Caco-2 (cell line): ENCODE measurements at regions of chr20 and their contacts with region 1.

Region 1: GRCh38 chr20:36886859-36887751 is 11.2 kb downstream of the TLDC2 start:
- DNase-seq: peak; percentile 94 to 97
- H3K4me3 ChIP-seq: no peak overlapping the region
- H3K4me3 Mint-ChIP-seq: peak overlapping the region; percentile 27
- H3K27ac Mint-ChIP-seq: no peak overlapping the region
- H3K4me1 ChIP-seq: peaks cover 9% of the 10 kb centered on the region; the same call in 1 of the 2 replicates
- H3K4me1 Mint-ChIP-seq: peaks cover 6% of the 10 kb centered on the region
- H3K27me3 ChIP-seq: no peaks in the 10 kb centered on the region
- H3K27me3 Mint-ChIP-seq: no peaks in the 10 kb centered on the region
- CTCF ChIP-seq: peak; percentile 100

Region 2: DNA sequence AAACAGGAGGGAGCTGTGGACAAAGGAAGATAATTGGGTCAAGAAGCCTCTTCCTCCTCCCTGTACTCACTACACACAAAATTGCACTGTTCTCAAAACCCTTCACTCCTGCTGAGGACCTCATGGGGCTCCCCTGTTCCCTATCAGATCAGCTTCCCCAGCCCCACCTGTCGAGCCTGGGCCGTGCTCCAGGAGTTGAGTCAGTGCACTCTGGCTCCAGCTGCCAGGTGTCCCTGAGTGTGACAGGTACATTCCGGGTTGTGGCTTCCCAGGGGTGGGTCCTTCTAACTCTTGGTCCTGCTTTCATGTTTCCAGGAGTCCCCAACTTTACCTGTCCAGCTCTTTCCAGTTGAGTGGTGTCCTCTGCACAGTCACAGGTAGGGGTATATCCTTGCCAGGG is 273.1 kb before region 1 on chr20:
- CTCF ChIA-PET with region 1: no interaction called
- POLR2A ChIA-PET with region 1: no interaction called
- intact Hi-C with region 1: loop called (anchors 1 kb)
- DNase-seq: no peak
- H3K4me3 ChIP-seq: no peak overlapping the region
- H3K4me3 Mint-ChIP-seq: no peak overlapping the region
- H3K27ac Mint-ChIP-seq: no peak overlapping the region
- H3K4me1 ChIP-seq: no peaks in the 10 kb centered on the region
- H3K4me1 Mint-ChIP-seq: no peaks in the 10 kb centered on the region
- H3K27me3 ChIP-seq: no peaks in the 10 kb centered on the region
- H3K27me3 Mint-ChIP-seq: no peaks in the 10 kb centered on the region
- CTCF ChIP-seq: no peak

Region 3: DNA sequence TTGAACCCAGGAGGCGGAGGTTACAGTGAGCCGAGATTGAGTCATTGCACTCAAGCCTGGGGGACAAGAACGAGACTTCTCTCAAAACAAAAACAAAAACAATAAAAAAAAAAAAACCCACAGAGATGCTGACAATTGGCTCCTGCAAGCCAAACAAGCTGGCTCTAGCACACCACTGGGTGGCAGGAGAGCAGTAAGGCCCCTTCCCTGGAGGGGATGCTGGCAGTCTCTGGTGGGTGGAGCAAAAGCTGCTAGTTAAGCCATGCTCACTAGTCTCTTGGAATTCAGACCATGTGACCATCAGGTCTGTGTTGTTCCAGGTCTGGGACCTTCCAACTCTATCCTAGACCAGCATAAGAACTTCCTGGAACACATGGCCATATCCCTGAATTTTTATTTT is 94.7 kb before region 1 on chr20:
- CTCF ChIA-PET with region 1: interaction called, 14 read pairs
- POLR2A ChIA-PET with region 1: no interaction called
- intact Hi-C with region 1: loop called (anchors 1 kb)
- DNase-seq: peak; percentile 94 to 95
- H3K4me3 ChIP-seq: no peak overlapping the region
- H3K4me3 Mint-ChIP-seq: no peak overlapping the region
- H3K27ac Mint-ChIP-seq: no peak overlapping the region
- H3K4me1 ChIP-seq: no peaks in the 10 kb centered on the region
- H3K4me1 Mint-ChIP-seq: no peaks in the 10 kb centered on the region
- H3K27me3 ChIP-seq: no peaks in the 10 kb centered on the region
- H3K27me3 Mint-ChIP-seq: no peaks in the 10 kb centered on the region
- CTCF ChIP-seq: peak; percentile 67 to 92

Region 4: GRCh38 chr20:36861875-36862801 is 25.0 kb before region 1 on chr20:
- CTCF ChIA-PET with region 1: interaction called, 5 read pairs
- POLR2A ChIA-PET with region 1: no interaction called
- intact Hi-C with region 1: loop called (anchors 1 kb)
- DNase-seq: peak in 1 of 2 experiments; percentile 47
- H3K4me3 ChIP-seq: peak overlapping the region; percentile 51
- H3K4me3 Mint-ChIP-seq: peak overlapping the region; percentile 50
- H3K27ac Mint-ChIP-seq: no peak overlapping the region
- H3K4me1 ChIP-seq: peaks cover 16% of the 10 kb centered on the region
- H3K4me1 Mint-ChIP-seq: peaks cover 13% of the 10 kb centered on the region
- H3K27me3 ChIP-seq: no peaks in the 10 kb centered on the region
- H3K27me3 Mint-ChIP-seq: no peaks in the 10 kb centered on the region
- CTCF ChIP-seq: no peak

Region 5: GRCh38 chr20:36984257-36984638 is 97.1 kb after region 1 on chr20:
- CTCF ChIA-PET with region 1: no interaction called
- POLR2A ChIA-PET with region 1: no interaction called
- intact Hi-C with region 1: no loop called
- DNase-seq: no peak
- H3K4me3 ChIP-seq: no peak overlapping the region
- H3K4me3 Mint-ChIP-seq: no peak overlapping the region
- H3K27ac Mint-ChIP-seq: no peak overlapping the region
- H3K4me1 ChIP-seq: no peaks in the 10 kb centered on the region
- H3K4me1 Mint-ChIP-seq: no peaks in the 10 kb centered on the region
- H3K27me3 ChIP-seq: no peaks in the 10 kb centered on the region
- H3K27me3 Mint-ChIP-seq: no peaks in the 10 kb centered on the region
- CTCF ChIP-seq: no peak